ENCODE measurements at regions of chr18 and their contacts with region 1.

Region 1: GRCh38 chr18:70355620-70356385 is 67.0 kb downstream of the SOCS6 start:
- DNase-seq: no peak
- ATAC-seq: no peak
- H3K4me3 ChIP-seq: no peak overlapping the region
- H3K27ac ChIP-seq: peak overlapping the region; percentile 99
- H3K4me1 ChIP-seq: peaks cover 42% of the 10 kb centered on the region
- H3K27me3 ChIP-seq: no peaks in the 10 kb centered on the region
- CTCF ChIP-seq: no peak

Region 2: DNA sequence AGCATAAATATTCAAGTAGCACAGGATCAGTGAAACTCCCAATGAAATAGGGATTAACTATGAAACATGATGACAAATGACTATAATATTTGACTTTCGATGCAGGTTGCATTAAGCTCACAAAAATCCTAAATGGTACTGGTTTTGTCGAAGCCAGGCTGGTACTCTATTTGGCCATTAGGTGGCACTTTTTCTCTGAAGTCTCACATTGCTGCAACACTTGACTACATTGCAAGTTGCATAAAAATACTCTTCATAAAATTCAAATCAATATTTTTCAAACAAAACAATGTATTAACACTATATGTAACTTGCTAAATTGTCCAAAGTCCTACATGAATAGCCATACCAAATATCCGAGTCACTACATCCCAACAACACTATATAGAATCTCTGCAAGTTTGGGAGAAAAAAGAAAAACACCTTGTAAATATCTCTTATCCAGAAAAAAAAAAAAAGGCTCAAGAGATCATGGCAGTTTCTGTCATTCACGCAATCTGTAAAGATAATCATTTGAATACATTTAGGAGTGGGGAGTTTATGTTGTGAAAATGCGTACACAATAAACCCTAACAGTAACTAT is 159.9 kb before region 1 on chr18:
- CTCF ChIA-PET with region 1: interaction called, 3 read pairs
- POLR2A ChIA-PET with region 1: no interaction called
- intact Hi-C with region 1: loop called (anchors 2 kb)
- DNase-seq: peak; percentile 76
- ATAC-seq: peak; percentile 70
- H3K4me3 ChIP-seq: no peak overlapping the region
- H3K27ac ChIP-seq: no peak overlapping the region
- H3K4me1 ChIP-seq: peaks cover 7% of the 10 kb centered on the region; the same call in 1 of the 2 replicates
- H3K27me3 ChIP-seq: no peaks in the 10 kb centered on the region
- CTCF ChIP-seq: peak; percentile 93

Region 3: GRCh38 chr18:70207181-70207580 is 148.6 kb before region 1 on chr18:
- CTCF ChIA-PET with region 1: no interaction called
- POLR2A ChIA-PET with region 1: no interaction called
- intact Hi-C with region 1: no loop called
- DNase-seq: no peak
- ATAC-seq: no peak
- H3K4me3 ChIP-seq: no peak overlapping the region
- H3K27ac ChIP-seq: no peak overlapping the region
- H3K4me1 ChIP-seq: peaks cover 8% of the 10 kb centered on the region; the same call in 1 of the 2 replicates
- H3K27me3 ChIP-seq: no peaks in the 10 kb centered on the region
- CTCF ChIP-seq: no peak

Region 4: GRCh38 chr18:70243131-70243530 is 112.7 kb before region 1 on chr18:
- CTCF ChIA-PET with region 1: no interaction called
- POLR2A ChIA-PET with region 1: no interaction called
- intact Hi-C with region 1: loop called (anchors 1 kb)
- DNase-seq: peak; percentile 88
- ATAC-seq: peak; percentile 97
- H3K4me3 ChIP-seq: peak overlapping the region; percentile 59
- H3K27ac ChIP-seq: peak overlapping the region; percentile 95
- H3K4me1 ChIP-seq: peaks cover 16% of the 10 kb centered on the region
- H3K27me3 ChIP-seq: no peaks in the 10 kb centered on the region
- CTCF ChIP-seq: no peak

Region 5: DNA sequence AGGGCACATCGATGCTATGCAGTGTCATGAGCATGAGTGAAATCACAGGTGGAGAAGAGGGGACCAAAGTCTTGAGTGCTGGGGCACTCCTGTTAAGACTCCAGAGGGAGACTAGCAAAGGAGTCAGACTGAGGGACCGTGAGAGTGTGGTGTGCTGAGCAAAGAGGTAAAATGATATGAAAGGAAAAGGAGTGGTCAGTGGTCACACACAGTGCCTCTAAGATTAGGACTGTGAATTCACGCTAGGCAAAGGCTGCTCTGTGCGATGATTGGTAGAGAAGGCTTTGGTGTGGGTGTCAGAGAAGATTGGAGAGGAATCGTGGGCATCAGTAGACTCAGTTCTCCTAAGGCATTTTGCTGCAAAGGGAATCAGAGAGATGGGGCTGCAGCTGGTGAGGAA is 54.1 kb before region 1 on chr18:
- CTCF ChIA-PET with region 1: no interaction called
- POLR2A ChIA-PET with region 1: no interaction called
- intact Hi-C with region 1: loop called (anchors 5 kb)
- DNase-seq: no peak
- ATAC-seq: no peak
- H3K4me3 ChIP-seq: no peak overlapping the region
- H3K27ac ChIP-seq: no peak overlapping the region
- H3K4me1 ChIP-seq: no peaks in the 10 kb centered on the region; the same call in 1 of the 2 replicates
- H3K27me3 ChIP-seq: no peaks in the 10 kb centered on the region
- CTCF ChIP-seq: no peak

Region 6: DNA sequence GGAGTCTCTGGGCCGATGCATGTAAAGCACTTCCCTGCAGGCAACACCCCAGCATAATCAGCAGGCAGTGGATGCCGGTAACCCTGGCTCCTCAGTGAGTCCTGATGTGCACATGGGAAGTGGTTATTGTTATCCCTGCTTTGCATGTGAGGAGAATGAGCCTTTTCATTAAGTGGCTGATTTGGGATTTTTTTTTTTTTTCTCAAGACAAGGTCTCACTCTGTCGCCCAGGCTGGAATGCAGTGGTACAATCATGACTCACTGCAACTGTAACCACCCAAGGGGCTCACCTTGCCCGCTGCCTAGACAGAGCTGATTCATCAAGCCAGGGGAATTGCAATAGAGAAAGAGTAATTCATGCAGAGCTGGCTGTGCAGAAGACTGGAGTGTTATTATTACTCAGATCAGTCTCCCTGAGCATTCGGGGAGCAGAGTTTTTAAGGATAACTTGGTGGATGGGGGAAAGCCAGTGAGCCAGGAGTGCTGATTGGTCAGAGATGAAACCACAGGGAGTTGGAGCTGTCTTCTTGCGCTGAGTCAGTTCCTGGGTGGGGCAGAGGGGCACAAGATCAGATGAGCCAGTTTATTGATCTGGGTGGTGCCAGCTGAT is 28.5 kb after region 1 on chr18:
- CTCF ChIA-PET with region 1: no interaction called
- POLR2A ChIA-PET with region 1: no interaction called
- intact Hi-C with region 1: loop called (anchors 1 kb)
- DNase-seq: peak; percentile 96
- ATAC-seq: peak; percentile 95
- H3K4me3 ChIP-seq: peak overlapping the region; percentile 47; the same call in 1 of the 2 replicates
- H3K27ac ChIP-seq: peak overlapping the region; percentile 97
- H3K4me1 ChIP-seq: peaks cover 24% of the 10 kb centered on the region
- H3K27me3 ChIP-seq: no peaks in the 10 kb centered on the region
- CTCF ChIP-seq: no peak

Region 7: GRCh38 chr18:70421471-70422390 is 65.9 kb after region 1 on chr18:
- CTCF ChIA-PET with region 1: interaction called, 5 read pairs
- POLR2A ChIA-PET with region 1: no interaction called
- intact Hi-C with region 1: loop called (anchors 1 kb)
- DNase-seq: peak; percentile 90
- ATAC-seq: peak; percentile 74
- H3K4me3 ChIP-seq: peak overlapping the region; percentile 49; the same call in 1 of the 2 replicates
- H3K27ac ChIP-seq: peak overlapping the region; percentile 98
- H3K4me1 ChIP-seq: peaks cover 57% of the 10 kb centered on the region
- H3K27me3 ChIP-seq: no peaks in the 10 kb centered on the region
- CTCF ChIP-seq: no peak

Region 8: DNA sequence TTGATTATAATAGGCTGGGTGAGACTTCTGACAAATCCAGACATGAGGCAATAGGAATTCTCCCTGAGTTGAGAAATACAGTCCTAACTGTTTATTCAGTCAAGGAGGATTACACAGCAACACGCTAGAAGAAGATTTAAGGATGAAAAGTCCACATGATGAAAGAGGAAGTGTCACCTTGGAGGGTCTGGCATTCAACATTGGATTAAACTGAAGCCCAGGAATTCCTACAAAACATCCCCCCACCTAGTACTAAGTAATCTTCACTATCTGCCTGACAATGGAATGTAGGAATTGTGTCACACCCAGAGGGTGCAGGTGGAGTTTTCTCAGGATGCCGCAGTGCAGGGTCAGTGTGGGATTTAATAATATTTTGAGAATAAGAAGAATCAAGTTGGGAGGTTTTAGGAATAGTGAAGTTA is 75.4 kb after region 1 on chr18:
- CTCF ChIA-PET with region 1: no interaction called
- POLR2A ChIA-PET with region 1: no interaction called
- intact Hi-C with region 1: loop called (anchors 1 kb)
- DNase-seq: no peak
- ATAC-seq: no peak
- H3K4me3 ChIP-seq: no peak overlapping the region
- H3K27ac ChIP-seq: no peak overlapping the region
- H3K4me1 ChIP-seq: peaks cover 5% of the 10 kb centered on the region; the same call in 1 of the 2 replicates
- H3K27me3 ChIP-seq: no peaks in the 10 kb centered on the region
- CTCF ChIP-seq: no peak